Natural killer cell (primary cell): ENCODE measurements at regions of chr15 and their contacts with region 1.

Region 1: DNA sequence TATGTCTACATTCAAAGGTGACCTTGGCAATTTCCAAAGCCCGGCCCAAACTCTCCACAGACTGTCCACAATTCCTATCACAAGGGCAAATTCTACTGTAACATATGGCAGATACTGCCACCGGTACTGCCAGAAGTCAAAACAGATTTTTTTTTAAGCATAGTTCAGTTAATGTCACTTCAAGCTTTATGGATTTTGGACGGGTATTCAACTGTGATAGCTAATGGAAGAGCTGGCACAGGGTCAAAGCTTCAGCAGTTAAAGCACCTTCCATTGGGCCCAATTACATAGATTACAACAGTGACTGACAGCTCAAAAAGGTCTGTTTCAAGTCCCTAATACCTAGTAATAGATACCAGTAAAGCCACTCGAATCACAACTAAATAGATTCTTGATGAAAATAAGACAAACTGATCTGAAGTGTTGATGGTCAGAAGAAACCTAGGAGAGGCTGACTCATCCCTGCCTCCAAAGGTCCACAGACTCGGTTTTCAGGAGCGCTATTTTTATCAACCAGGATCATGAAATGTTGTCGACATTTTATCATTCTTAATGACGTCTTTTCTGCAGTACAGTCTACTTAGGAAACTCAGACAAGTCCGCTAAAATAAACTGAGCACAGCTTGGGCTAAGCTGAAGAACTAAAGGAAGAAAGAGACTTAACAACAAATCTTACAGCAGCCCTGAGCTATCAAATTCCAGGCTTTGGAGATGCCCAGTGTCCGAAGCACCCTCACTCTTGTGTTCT is 38.7 kb downstream of the ANXA2 start:
- DNase-seq: no peak
- ATAC-seq: no peak
- H3K4me3 ChIP-seq: no peak overlapping the region
- H3K4me3 Mint-ChIP-seq: no peak overlapping the region
- H3K27ac ChIP-seq: no peak overlapping the region
- H3K27ac Mint-ChIP-seq: no peak overlapping the region
- H3K4me1 ChIP-seq: no peaks in the 10 kb centered on the region
- H3K4me1 Mint-ChIP-seq: peaks cover 11 to 15% of the 10 kb centered on the region in 2 donors
- H3K27me3 ChIP-seq: no peaks in the 10 kb centered on the region
- H3K27me3 Mint-ChIP-seq: no peaks in the 10 kb centered on the region
- CTCF ChIP-seq: no peak

Region 2: DNA sequence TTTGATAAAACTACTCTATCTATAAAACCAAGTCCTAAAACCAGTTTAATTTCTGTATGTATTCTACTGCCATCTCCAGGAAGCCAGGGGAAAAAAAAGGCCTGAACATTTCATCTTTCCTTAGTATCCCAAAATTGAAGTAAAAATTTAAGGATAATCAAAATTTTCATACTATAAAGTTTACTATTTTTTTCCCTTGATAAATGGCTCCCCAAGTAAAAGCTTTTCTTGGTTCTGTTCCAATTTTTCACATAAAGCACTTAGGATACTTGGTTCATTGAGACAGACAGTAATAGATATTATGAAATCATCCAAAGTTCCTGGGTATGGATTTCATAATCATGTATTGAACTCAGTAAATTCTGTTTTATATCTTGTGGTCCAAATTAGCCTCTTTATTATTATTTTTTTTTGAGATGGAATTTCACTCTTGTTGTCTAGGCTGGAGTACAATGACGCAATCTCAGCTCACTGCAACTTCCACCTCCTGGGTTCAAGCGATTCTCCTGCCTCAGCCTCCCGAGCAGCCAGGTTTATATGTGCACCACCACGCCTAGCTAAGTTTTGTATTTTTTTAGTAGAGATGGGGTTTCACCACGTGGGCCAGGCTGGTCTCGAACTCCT is 85.3 kb after region 1 on chr15:
- intact Hi-C with region 1: loop called (anchors 2 kb)
- DNase-seq: peak in 1 of 2 donors; percentile 15
- ATAC-seq: no peak
- H3K4me3 ChIP-seq: no peak overlapping the region
- H3K4me3 Mint-ChIP-seq: no peak overlapping the region
- H3K27ac ChIP-seq: no peak overlapping the region
- H3K27ac Mint-ChIP-seq: no peak overlapping the region
- H3K4me1 ChIP-seq: no peaks in the 10 kb centered on the region
- H3K4me1 Mint-ChIP-seq: peaks cover 0 to 5% of the 10 kb centered on the region in 2 donors
- H3K27me3 ChIP-seq: no peaks in the 10 kb centered on the region
- H3K27me3 Mint-ChIP-seq: no peaks in the 10 kb centered on the region
- CTCF ChIP-seq: peak; percentile 30

Region 3: GRCh38 chr15:60520825-60521368 is 161.8 kb after region 1 on chr15:
- intact Hi-C with region 1: loop called (anchors 1 kb)
- DNase-seq: peak; percentile 72 to 91
- ATAC-seq: peak; percentile 88 to 90 (median 89)
- H3K4me3 ChIP-seq: no peak overlapping the region
- H3K4me3 Mint-ChIP-seq: no peak overlapping the region
- H3K27ac ChIP-seq: no peak overlapping the region
- H3K27ac Mint-ChIP-seq: peak overlapping the region; percentile 61 to 71
- H3K4me1 ChIP-seq: peaks cover 14% of the 10 kb centered on the region
- H3K4me1 Mint-ChIP-seq: peaks cover 66% of the 10 kb centered on the region in 2 donors
- H3K27me3 ChIP-seq: no peaks in the 10 kb centered on the region
- H3K27me3 Mint-ChIP-seq: no peaks in the 10 kb centered on the region
- CTCF ChIP-seq: peak; percentile 96

Region 4: DNA sequence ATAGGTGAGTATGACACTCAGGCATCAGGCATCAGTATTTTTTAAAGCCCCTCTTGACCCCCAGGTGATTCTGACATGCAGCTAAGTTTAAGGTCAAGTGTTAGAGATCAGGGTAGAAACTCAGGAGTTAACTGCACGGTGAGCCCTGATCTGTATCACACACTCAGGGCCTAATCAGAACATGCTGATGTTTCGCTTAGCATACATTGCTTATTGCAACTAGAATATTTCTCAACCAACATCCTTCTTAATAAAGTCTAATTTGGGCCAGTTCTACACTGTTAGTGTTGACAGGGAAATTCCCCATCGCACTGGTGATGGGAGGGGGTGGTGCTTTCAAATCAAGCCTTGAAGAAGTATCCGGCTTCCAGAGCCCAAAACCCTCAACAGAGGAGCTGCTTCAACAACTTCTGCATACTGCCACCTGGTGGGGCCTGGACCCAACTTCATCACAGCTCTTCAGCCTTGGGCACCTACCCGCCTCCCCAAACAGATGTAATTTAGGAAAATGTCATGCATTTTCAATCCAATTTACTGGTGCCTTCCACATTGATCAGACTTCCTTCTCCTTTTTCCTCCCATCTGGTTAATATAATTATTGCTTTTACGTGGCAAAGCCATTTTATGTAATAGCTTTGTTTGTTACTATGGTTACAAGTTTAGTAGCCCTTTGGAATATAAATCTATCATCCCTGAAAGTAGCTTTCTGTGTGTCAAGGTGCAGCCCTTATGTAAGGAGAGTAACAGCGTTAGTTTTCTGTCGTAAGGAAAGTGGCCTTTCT is 557.8 kb after region 1 on chr15:
- intact Hi-C with region 1: loop called (anchors 5 kb)
- DNase-seq: peak; percentile 76 to 96
- ATAC-seq: peak; percentile 94 to 98 (median 96)
- H3K4me3 ChIP-seq: no peak overlapping the region
- H3K4me3 Mint-ChIP-seq: no peak overlapping the region
- H3K27ac ChIP-seq: peak overlapping the region; percentile 12
- H3K27ac Mint-ChIP-seq: peak overlapping the region; percentile 82 to 83
- H3K4me1 ChIP-seq: peaks cover 7% of the 10 kb centered on the region
- H3K4me1 Mint-ChIP-seq: peaks cover 8 to 13% of the 10 kb centered on the region in 2 donors
- H3K27me3 ChIP-seq: no peaks in the 10 kb centered on the region
- H3K27me3 Mint-ChIP-seq: no peaks in the 10 kb centered on the region
- CTCF ChIP-seq: peak; percentile 88